Activated CD8-positive, alpha-beta memory T cell treated with anti-CD3 and anti-CD28 coated beads, Interleukin-2, amount 10 ng/mL, durations not matched to agents 7 days and 5 days (primary cell): ENCODE measurements at regions of chr22 and their contacts with region 1.

Region 1: DNA sequence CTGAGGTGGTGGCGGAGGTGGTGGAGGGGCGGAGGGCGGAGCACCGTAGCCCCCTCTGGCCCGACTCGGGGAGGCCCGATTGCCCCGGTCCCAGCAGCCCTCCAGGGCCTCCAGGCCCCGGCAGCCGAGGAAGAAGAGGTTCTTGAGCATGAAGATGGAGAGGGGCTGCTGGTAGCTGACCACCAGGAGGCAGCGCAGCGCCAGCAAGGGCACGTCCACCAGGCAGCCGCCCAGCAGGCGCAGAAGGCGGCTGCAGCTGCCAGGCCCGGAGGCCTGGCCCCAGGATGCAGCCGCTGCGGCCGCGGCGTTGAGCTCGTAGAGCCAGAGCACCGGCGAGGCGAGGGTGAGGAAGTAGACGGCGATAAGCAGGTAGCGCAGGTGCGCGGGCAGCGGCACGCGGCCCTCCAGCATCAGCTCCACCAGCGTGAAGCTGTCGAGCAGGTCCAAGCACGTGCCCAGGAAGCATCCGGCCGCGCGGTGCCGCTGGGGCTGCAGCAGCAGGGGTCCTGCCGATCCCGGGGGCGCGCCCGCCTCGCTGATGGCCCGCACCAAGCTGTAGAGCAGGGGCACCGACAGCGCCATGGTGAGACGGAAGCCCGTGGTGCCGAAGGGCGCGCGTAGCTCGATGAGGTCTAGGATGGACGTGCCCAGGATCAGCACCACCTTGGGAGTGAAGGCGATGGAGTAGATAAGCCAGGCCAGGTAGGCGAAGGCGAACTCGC is 1.5 kb downstream of the TMEM121B start:
- DNase-seq: no peak
- ATAC-seq: no peak
- H3K4me3 Mint-ChIP-seq: no peak overlapping the region
- H3K27ac Mint-ChIP-seq: peak overlapping the region; percentile 52
- H3K4me1 Mint-ChIP-seq: peaks cover 42% of the 10 kb centered on the region
- H3K27me3 Mint-ChIP-seq: peaks cover 34% of the 10 kb centered on the region

Region 2: GRCh38 chr22:16936625-16937024 is 183.0 kb before region 1 on chr22:
- CTCF ChIA-PET with region 1: no interaction called
- DNase-seq: no peak
- ATAC-seq: no peak
- H3K4me3 Mint-ChIP-seq: no peak overlapping the region
- H3K27ac Mint-ChIP-seq: no peak overlapping the region
- H3K4me1 Mint-ChIP-seq: no peaks in the 10 kb centered on the region
- H3K27me3 Mint-ChIP-seq: peaks cover 4% of the 10 kb centered on the region

Region 3: GRCh38 chr22:16989915-16990314 is 129.7 kb before region 1 on chr22:
- CTCF ChIA-PET with region 1: no interaction called
- DNase-seq: no peak
- ATAC-seq: no peak
- H3K4me3 Mint-ChIP-seq: no peak overlapping the region
- H3K27ac Mint-ChIP-seq: no peak overlapping the region
- H3K4me1 Mint-ChIP-seq: no peaks in the 10 kb centered on the region
- H3K27me3 Mint-ChIP-seq: peaks cover 12% of the 10 kb centered on the region

Region 4: GRCh38 chr22:17095538-17095937 is 24.1 kb before region 1 on chr22:
- CTCF ChIA-PET with region 1: no interaction called
- DNase-seq: no peak
- ATAC-seq: no peak
- H3K4me3 Mint-ChIP-seq: no peak overlapping the region
- H3K27ac Mint-ChIP-seq: no peak overlapping the region
- H3K4me1 Mint-ChIP-seq: peaks cover 49% of the 10 kb centered on the region
- H3K27me3 Mint-ChIP-seq: peaks cover 2% of the 10 kb centered on the region

Region 5: DNA sequence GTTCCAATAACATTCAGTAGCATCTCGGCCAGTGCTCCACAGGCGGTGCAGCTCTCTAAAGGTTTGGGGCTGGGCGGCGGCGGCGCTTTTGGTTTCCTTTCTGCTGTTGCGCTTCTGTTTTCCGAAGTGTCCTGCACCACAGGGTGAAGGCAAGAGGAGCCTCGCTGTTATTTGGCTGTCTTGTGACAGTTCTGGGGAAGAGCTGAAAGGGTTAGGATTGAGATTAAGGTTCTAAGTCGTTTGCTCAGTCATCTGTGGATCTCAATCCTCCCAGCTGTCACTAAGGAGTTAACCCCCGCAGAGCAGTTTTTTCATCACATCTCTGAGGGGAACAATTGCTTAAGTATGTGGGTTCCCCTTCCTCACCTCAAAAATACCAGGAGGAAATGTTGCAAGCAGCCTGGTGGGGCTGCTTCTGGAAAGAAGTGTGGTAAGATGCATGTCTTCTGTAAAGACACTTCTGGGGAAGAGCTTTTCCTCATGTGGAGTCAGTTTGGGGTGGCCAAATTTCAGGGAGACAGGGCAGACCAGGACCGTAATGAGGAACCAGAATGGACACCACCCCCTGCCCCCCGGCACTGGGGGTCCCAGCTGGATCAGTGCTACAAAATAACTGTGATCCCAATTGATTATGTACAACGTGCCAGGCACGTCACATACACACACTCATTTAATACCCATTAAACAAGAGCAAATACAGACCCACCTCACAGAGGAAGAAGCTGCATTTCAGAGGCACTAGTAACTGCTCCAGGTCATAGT is 12.7 kb before region 1 on chr22:
- CTCF ChIA-PET with region 1: interaction called, 14 read pairs
- DNase-seq: peak; percentile 74
- ATAC-seq: peak; percentile 86
- H3K4me3 Mint-ChIP-seq: peak overlapping the region; percentile 61
- H3K27ac Mint-ChIP-seq: peak overlapping the region; percentile 87
- H3K4me1 Mint-ChIP-seq: peaks cover 29% of the 10 kb centered on the region
- H3K27me3 Mint-ChIP-seq: no peaks in the 10 kb centered on the region